ENCODE measurements at regions of chr15 and their contacts with region 1.

Region 1: GRCh38 chr15:73697033-73697467 is 12.9 kb downstream of the CD276 start:
- DNase-seq: no peak

Region 2: DNA sequence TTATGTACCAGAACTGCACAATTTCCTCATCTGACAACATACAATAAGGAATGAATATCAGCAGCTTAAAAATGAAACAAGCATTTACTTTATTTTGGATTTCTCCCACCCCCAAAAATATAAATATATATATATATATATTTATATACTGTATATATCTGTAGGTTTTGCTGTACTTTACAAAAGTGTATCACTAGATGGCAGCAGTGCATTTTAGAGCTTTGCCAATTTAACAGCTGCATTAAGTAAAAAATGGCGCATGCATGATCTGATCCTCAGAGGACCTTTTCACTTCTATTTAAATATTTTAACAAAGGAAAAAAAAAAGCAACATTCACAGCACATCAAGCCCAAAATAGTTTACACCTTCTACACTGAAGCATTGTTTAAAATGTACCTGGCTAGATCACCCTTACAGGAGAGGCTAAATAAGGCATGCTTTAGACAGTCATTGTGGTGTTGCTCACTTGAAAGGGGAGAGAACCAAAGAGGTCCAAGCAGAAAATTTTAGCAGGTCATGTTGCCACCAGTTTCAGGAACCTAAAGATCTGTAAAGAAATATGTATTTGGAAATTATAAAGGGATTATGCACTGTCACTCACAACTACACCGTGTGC is 136.4 kb before region 1 on chr15:
- CTCF ChIA-PET with region 1: interaction called, 10 read pairs
- POLR2A ChIA-PET with region 1: no interaction called
- DNase-seq: peak; percentile 24

Region 3: DNA sequence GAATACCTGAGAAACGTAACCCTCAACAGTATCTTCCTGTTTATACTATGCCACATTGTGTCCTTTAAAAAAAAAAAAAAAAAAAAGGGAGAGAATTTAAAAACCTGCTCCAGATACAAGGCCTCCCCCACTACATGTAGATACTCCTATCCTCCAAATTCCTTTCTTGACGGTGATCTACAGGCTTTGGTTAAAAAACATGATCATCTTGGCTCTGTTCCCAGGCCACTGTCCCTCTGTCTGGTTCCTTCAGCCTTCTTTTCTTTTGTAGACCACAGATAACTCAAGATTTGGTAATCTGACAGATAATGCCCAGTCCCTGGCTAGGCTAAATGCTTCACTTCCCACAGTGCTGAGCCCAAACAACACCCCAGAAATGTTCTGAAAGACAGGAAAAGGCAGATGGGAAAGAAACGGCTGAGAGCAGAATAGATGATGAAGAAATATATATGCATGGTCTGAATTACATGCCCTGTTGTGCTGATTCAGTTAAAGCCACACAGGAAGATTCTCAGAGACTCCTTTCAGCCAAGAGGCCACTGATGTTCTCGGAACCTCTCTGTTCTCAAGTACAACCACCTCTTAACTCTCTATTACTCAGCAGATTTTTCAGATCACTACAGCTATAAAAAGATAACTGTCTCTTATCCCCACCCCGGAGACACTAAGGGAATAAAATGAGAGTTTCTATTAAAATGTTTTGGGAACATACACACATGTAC is 112.2 kb before region 1 on chr15:
- CTCF ChIA-PET with region 1: no interaction called
- POLR2A ChIA-PET with region 1: no interaction called
- DNase-seq: no peak

Region 4: GRCh38 chr15:73677146-73677607 is 19.9 kb before region 1 on chr15:
- CTCF ChIA-PET with region 1: interaction called, 18 read pairs
- POLR2A ChIA-PET with region 1: no interaction called
- DNase-seq: peak; percentile 72

Region 5: GRCh38 chr15:73683777-73684580 is 13.1 kb before region 1 on chr15 and contains the start of gene CD276:
- CTCF ChIA-PET with region 1: interaction called, 16 read pairs
- POLR2A ChIA-PET with region 1: interaction called, 6 read pairs
- DNase-seq: peak; percentile 62

Region 6: DNA sequence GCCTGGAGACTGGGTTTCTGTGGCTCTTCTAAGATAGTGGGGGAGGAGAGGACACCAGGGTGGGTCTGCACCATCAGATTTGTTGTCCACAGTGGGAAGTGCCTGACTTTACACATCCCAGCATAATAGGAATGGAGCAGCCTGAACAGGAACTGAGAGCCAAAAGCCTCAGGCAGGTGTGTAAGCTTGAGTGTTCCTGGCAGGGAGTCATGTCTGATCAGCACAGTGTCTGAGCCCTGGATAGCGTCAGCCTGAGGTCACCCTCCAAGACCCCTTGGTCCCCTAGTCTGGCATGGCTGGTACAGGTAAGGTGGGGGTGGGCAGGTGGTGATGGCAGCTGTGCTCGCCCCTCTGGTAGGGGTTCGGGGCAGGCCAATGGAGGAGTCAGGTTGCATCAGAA is 35.9 kb after region 1 on chr15:
- CTCF ChIA-PET with region 1: no interaction called
- POLR2A ChIA-PET with region 1: no interaction called
- DNase-seq: no peak

Region 7: GRCh38 chr15:73786518-73786917 is 89.5 kb after region 1 on chr15:
- CTCF ChIA-PET with region 1: no interaction called
- POLR2A ChIA-PET with region 1: no interaction called
- DNase-seq: no peak